Sigmoid colon (tissue), 7 donors: ENCODE measurements at regions of chr17 and their contacts with region 1.

Region 1: GRCh38 chr17:74873038-74873873 is 462 bp upstream of the FDXR start:
- DNase-seq: peak; percentile 100
- H3K4me3 ChIP-seq: peak overlapping the region; percentile 49 to 63 (median 58)
- H3K27ac ChIP-seq: peak overlapping the region; percentile 82 to 95 (median 90)
- H3K4me1 ChIP-seq: peaks cover 0 to 20% (median 13%) of the 10 kb centered on the region in 4 donors
- H3K27me3 ChIP-seq: peaks cover 0 to 7% (median 0%) of the 10 kb centered on the region in 3 donors
- CTCF ChIP-seq: no peak
- EP300 ChIP-seq: peak in 1 of 4 donors; percentile 75
- POLR2A ChIP-seq: peak; percentile 97 to 99

Region 2: DNA sequence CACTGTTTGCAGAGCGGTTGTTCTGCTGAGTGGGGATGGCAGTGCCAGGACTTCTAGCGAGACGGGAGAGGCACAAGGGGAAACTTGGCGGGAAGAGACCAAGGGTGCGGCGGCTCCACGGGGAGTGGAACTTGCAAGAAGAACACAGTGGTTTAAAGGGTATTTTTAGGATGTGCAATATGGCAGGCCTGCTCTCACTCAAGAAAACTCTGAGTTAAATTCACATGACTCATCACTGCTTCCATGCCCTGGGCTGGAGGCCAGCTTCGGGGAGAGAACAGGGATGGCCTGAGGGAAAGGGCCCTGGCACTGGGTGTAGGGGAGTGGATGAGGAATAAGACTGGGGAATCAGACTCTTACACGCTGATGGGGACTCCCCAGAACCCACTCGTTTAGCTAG is 267.9 kb before region 1 on chr17:
- intact Hi-C with region 1: no loop called
- DNase-seq: peak; percentile 94
- H3K4me3 ChIP-seq: no peak overlapping the region
- H3K27ac ChIP-seq: peak overlapping the region; percentile 59 to 84 (median 76)
- H3K4me1 ChIP-seq: peaks cover 0 to 17% (median 14%) of the 10 kb centered on the region in 4 donors
- H3K27me3 ChIP-seq: no peaks in the 10 kb centered on the region
- CTCF ChIP-seq: no peak
- EP300 ChIP-seq: peak in 2 of 4 donors; percentile 39 to 62
- POLR2A ChIP-seq: no peak

Region 3: DNA sequence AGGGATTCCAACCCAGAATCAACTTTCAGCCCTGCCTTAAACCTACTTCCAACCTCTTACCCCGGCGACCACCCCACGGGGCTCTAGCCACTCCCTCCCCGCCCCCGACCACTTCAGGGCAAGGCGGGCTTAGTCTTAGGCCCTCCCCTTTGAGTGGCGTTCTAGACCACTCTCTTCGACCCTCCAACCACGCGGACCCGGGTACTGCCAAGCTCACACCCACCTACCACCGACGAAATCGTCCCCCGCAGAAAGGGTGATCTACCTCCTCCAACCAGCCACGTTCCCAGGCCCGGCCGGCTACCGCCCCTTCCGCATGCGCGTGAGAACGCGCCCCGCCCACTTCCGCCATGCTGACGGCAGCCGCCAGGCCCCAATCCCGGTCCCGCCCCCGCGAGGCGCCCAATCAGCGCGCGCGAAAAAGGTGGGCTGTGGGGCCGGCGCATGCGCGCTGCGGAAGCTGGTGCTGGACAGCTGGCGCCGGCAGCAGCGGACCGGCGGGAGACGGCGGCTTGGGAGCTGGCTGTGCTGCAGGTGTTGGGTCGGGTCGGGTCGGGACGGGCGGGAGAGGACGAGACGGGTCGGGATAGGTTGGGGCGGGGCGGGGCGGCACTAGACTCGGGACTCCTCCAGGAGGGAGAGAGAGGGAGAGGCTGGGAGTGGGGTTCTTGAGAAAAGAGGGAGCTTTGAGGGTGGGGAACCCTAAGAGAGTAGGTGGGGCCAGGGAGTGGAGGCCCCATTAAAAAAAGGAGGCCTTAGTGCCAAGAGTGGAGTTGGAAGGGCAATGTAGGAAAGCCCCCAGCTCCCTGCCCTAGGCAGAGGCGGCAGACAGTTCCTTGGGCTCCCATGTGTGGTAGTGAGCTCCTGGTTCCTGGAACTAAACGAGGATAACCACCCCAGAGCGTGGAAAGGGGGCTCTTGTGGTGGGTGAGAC is 96.9 kb before region 1 on chr17 and contains the start of gene NAT9:
- intact Hi-C with region 1: loop called (anchors 5 kb)
- DNase-seq: peak; percentile 99
- H3K4me3 ChIP-seq: peak within 1 kb of the TSS; percentile 47 to 90 (median 77)
- H3K27ac ChIP-seq: peak within 1 kb of the TSS; percentile 66 to 80 (median 74)
- H3K4me1 ChIP-seq: peaks cover 0 to 33% (median 21%) of the 10 kb centered on the region in 4 donors
- H3K27me3 ChIP-seq: no peaks in the 10 kb centered on the region
- CTCF ChIP-seq: no peak
- EP300 ChIP-seq: peak in 1 of 4 donors; percentile 46
- POLR2A ChIP-seq: peak in 1 of 2 donors; percentile 26
- total RNA-seq, gene NAT9: 14.3 to 29.9 (median 21.7) TPM

Region 4: DNA sequence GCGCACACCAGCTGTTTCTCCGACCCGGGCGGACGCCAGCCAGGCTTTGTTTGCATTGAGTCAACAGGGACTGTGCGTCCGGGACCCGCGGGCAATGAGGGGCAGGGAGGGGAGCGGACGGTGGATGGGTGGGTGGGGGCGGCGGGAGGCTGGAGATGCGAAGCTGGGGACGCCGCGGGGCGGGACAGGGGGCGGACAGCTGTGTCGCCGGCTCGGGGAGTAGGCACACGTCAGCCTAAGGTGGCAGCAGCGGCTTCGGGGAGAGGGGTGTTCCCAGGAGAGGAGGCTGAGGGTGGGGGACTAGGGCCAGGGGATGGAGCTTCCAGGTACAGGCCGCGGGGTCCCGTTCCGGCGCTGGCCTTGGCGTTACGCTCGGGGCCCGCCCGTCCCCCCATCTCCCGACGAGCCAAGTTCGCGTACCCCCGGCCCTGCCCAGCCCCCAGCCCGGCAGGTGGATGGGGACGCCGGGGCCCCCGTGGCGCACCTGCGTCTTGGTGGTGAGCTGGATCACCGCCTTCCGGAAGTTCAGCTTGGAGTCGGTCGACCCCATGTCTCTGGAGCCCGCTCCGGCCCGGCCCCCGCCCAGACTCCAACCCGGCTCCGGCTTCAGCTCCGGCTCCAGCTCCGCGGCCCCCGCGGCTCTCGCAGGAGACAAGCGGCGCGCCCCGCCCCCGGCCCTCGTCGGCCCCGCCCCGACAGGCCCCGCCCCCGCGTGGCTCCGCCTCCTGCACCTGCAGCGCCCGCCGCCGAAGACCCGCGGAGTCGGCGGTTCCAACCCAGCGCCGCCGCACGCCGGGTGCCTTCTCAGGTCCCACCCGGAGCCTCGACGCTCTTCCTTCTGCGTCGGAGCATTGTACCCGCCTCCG is 99.1 kb after region 1 on chr17 and contains the start of gene HID1:
- intact Hi-C with region 1: no loop called
- DNase-seq: no peak
- H3K4me3 ChIP-seq: peak within 1 kb of the TSS; percentile 51 to 65 (median 56)
- H3K27ac ChIP-seq: peak within 1 kb of the TSS; percentile 28 to 61 (median 50)
- H3K4me1 ChIP-seq: peaks cover 0 to 24% (median 22%) of the 10 kb centered on the region in 4 donors
- H3K27me3 ChIP-seq: peaks cover 9 to 23% (median 23%) of the 10 kb centered on the region in 3 donors
- CTCF ChIP-seq: no peak
- EP300 ChIP-seq: no peak
- POLR2A ChIP-seq: no peak
- total RNA-seq, gene HID1: 7.1 to 21.6 (median 8.3) TPM